ENCODE measurements at regions of chr3 and their contacts with region 1.

Region 1: GRCh38 chr3:102089904-102090492 is 240.7 kb downstream of the NFKBIZ start:
- DNase-seq: no peak
- H3K4me3 Mint-ChIP-seq: no peak overlapping the region
- H3K27ac Mint-ChIP-seq: peak overlapping the region; percentile 31
- H3K4me1 Mint-ChIP-seq: peaks cover 63% of the 10 kb centered on the region
- H3K27me3 Mint-ChIP-seq: no peaks in the 10 kb centered on the region

Region 2: DNA sequence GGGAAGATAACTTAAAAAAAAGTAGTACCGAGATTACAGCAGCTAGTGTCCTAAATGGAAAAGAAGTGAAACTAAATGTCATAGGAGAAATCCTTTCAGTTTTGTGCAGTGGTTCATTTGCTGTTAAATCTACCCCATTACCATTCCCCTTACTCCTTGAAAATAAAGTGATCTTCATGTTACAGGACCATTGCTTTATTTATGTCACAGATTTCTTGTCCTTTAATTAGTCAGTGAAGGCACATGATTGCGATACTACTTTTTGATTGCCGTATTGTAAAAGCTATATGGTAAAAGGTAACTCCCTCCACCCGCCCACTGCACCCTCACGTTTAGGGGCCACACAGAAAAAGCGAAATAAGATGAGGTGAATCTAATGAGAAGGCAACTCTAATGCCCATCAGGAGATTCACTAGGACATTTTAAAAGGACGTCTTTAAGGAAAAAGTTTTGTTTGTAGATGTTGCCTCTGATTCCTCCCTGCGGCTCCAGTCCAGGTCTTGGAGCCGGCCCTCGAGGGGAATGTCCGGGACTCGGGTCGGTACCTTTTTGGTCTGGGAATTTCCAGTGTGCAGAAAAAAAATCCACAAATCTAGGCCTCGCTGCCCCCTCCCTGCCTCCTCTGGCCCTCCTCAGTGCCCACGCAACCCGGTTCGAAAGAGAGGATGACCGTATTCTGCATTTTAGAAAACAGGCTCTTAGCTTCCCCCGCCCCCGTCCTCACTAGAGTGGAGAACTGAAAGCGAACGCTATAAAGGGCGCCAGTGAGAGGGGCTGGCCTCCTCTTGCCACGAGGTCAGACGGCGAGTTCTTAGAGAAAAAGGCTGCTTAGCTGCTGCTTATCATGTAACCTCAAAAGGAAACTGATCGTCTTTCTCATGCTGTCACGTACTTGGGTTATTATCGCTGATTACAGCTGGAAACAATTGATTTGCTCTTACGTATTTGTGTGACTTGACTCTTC is 262.5 kb before region 1 on chr3:
- intact Hi-C with region 1: loop called (anchors 1 kb)
- DNase-seq: peak; percentile 77
- H3K4me3 Mint-ChIP-seq: peak overlapping the region; percentile 93
- H3K27ac Mint-ChIP-seq: peak overlapping the region; percentile 98
- H3K4me1 Mint-ChIP-seq: peaks cover 55% of the 10 kb centered on the region
- H3K27me3 Mint-ChIP-seq: no peaks in the 10 kb centered on the region

Region 3: GRCh38 chr3:101950510-101950909 is 139.5 kb before region 1 on chr3:
- intact Hi-C with region 1: loop called (anchors 1 kb)
- DNase-seq: no peak
- H3K4me3 Mint-ChIP-seq: no peak overlapping the region
- H3K27ac Mint-ChIP-seq: peak overlapping the region; percentile 53
- H3K4me1 Mint-ChIP-seq: peaks cover 26% of the 10 kb centered on the region
- H3K27me3 Mint-ChIP-seq: no peaks in the 10 kb centered on the region

Region 4: DNA sequence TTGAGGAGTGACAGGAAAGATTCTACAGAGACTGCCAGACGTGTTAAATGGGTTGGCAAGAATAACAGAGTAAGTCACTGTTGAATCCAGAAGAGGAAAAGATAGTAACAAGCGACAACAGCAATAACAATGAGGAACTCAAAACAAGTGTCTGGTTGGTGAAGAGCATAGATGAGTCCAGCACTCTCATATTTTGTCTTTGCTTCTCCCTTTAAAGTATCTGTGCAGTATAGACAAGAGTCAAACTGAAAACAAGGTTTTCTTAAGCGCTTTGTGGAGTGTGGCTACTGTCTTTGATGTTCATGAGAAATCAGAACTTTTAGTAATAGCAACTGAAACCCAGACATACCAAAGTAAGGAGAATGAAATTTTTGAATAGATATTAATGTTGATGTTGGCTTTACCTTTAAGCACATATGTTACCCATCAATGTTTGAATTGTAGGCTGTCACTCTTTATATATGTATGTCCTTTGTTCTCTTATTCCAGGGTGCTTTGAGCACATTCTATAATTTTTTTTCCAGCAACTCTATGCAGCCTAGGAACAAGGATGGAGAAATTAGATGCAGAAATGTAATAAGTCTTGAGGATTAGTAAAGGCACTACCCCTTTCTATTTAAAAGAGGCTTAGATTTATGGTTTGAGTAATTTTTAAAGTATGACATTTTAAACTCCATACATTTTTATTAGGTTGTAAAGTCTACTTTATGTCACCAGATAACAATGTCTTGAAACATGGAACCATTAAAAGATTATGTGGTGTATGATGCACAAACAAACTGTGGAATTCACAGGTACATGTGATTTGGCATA is 55.2 kb before region 1 on chr3:
- intact Hi-C with region 1: loop called (anchors 5 kb)
- DNase-seq: no peak
- H3K4me3 Mint-ChIP-seq: no peak overlapping the region
- H3K27ac Mint-ChIP-seq: no peak overlapping the region
- H3K4me1 Mint-ChIP-seq: peaks cover 9% of the 10 kb centered on the region
- H3K27me3 Mint-ChIP-seq: peaks cover 3% of the 10 kb centered on the region

Region 5: GRCh38 chr3:102106416-102107097 is 16.6 kb after region 1 on chr3:
- intact Hi-C with region 1: loop called (anchors 1 kb)
- DNase-seq: no peak
- H3K4me3 Mint-ChIP-seq: no peak overlapping the region
- H3K27ac Mint-ChIP-seq: peak overlapping the region; percentile 74
- H3K4me1 Mint-ChIP-seq: peaks cover 19% of the 10 kb centered on the region
- H3K27me3 Mint-ChIP-seq: no peaks in the 10 kb centered on the region

Region 6: DNA sequence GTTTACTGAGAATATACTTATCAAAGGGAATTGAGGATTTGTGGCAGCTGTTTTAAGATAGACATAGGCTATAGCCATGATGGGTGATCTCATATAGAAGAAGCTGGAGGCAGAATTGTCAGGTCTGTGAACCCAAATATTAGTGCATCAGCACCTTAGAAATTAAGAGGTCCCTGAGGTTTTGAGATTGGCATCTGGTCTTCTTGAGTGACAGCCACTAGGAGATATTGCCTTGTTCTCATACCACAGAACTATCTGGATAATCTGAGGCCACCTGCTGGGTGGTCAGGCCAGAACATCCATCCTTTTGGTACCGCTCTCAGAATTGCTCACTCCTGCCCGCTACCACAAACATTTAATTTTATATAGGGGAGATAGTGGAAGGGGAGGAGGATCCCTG is 134.1 kb after region 1 on chr3:
- intact Hi-C with region 1: loop called (anchors 1 kb)
- DNase-seq: no peak
- H3K4me3 Mint-ChIP-seq: no peak overlapping the region
- H3K27ac Mint-ChIP-seq: no peak overlapping the region
- H3K4me1 Mint-ChIP-seq: peaks cover 38% of the 10 kb centered on the region
- H3K27me3 Mint-ChIP-seq: peaks cover 16% of the 10 kb centered on the region

Region 7: DNA sequence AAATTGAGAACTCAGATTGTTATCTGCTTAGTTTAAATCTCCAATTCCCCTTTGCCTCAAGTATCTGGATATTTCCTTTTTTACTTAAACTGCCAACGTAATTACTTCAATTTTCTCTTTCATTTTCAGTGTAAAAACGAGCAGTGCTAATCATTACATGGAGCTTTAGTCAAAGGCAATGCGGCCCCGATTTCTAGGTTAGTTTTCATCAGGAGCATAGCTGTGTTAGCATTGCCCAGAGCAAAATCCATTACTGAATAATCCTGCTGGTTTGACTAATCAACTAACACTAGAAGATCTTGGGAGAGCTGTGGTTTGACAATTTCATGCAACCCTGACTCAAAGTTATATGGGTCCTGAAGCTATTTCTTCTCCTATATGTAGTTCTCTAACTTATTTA is 391.1 kb after region 1 on chr3:
- intact Hi-C with region 1: no loop called
- DNase-seq: no peak
- H3K4me3 Mint-ChIP-seq: no peak overlapping the region
- H3K27ac Mint-ChIP-seq: no peak overlapping the region
- H3K4me1 Mint-ChIP-seq: peaks cover 1% of the 10 kb centered on the region
- H3K27me3 Mint-ChIP-seq: no peaks in the 10 kb centered on the region

Region 8: DNA sequence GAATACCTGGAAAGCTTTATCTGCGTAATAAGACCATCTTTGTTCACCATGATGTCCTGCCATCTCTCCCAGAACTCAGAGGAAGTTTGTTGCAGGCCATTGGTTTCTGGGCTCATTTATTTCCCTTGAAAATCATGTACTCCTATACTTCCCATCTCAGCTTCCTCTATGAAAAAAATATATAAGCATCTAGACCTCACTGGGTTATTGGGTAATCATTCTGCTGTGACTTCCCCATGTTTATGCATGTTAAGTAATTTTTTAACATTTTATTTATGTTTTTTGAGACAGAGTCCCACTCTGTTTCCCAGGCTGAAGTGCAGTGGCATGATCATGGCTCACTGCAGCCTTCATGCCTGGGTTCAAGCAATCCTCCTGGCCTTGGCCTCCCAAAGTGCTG is 529.4 kb after region 1 on chr3:
- intact Hi-C with region 1: no loop called
- DNase-seq: no peak
- H3K4me3 Mint-ChIP-seq: no peak overlapping the region
- H3K27ac Mint-ChIP-seq: no peak overlapping the region
- H3K4me1 Mint-ChIP-seq: no peaks in the 10 kb centered on the region
- H3K27me3 Mint-ChIP-seq: no peaks in the 10 kb centered on the region

Measured in activated T-helper 2 cell treated with anti-CD3 and anti-CD28 coated beads, Interferon-gamma antibody, Interleukin-2, Interleukin-4, amounts not matched to agents 10 μg/mL and 5 μg/mL and 100 μg/mL, durations not matched to agents 14 hours and 24 hours and 36 hours (primary cell).